MCF 10A (cell line): ENCODE measurements at regions of chr6 and their contacts with region 1.

Region 1: GRCh38 chr6:148177589-148178233 is 164.9 kb upstream of the SASH1 start:
- DNase-seq: peak; percentile 72
- H3K4me3 Mint-ChIP-seq: no peak overlapping the region
- H3K27ac Mint-ChIP-seq: no peak overlapping the region
- H3K4me1 Mint-ChIP-seq: no peaks in the 10 kb centered on the region
- H3K27me3 Mint-ChIP-seq: no peaks in the 10 kb centered on the region
- CTCF ChIP-seq: peak; percentile 76

Region 2: GRCh38 chr6:148144917-148145521 is 32.7 kb before region 1 on chr6:
- CTCF ChIA-PET with region 1: no interaction called
- POLR2A ChIA-PET with region 1: no interaction called
- intact Hi-C with region 1: no loop called
- DNase-seq: peak; percentile 76
- H3K4me3 Mint-ChIP-seq: no peak overlapping the region
- H3K27ac Mint-ChIP-seq: no peak overlapping the region
- H3K4me1 Mint-ChIP-seq: peaks cover 11% of the 10 kb centered on the region
- H3K27me3 Mint-ChIP-seq: no peaks in the 10 kb centered on the region
- CTCF ChIP-seq: peak; percentile 37

Region 3: GRCh38 chr6:148166339-148166968 is 11.3 kb before region 1 on chr6:
- CTCF ChIA-PET with region 1: interaction called, 11 read pairs
- POLR2A ChIA-PET with region 1: no interaction called
- intact Hi-C with region 1: no loop called
- DNase-seq: peak; percentile 71
- H3K4me3 Mint-ChIP-seq: no peak overlapping the region
- H3K27ac Mint-ChIP-seq: no peak overlapping the region
- H3K4me1 Mint-ChIP-seq: no peaks in the 10 kb centered on the region
- H3K27me3 Mint-ChIP-seq: no peaks in the 10 kb centered on the region
- CTCF ChIP-seq: peak; percentile 63

Region 4: GRCh38 chr6:148240461-148240840 is 62.7 kb after region 1 on chr6:
- CTCF ChIA-PET with region 1: interaction called, 258 read pairs
- POLR2A ChIA-PET with region 1: interaction called, 4 read pairs
- intact Hi-C with region 1: no loop called
- DNase-seq: no peak
- H3K4me3 Mint-ChIP-seq: no peak overlapping the region
- H3K27ac Mint-ChIP-seq: no peak overlapping the region
- H3K4me1 Mint-ChIP-seq: peaks cover 29% of the 10 kb centered on the region
- H3K27me3 Mint-ChIP-seq: no peaks in the 10 kb centered on the region
- CTCF ChIP-seq: no peak

Region 5: DNA sequence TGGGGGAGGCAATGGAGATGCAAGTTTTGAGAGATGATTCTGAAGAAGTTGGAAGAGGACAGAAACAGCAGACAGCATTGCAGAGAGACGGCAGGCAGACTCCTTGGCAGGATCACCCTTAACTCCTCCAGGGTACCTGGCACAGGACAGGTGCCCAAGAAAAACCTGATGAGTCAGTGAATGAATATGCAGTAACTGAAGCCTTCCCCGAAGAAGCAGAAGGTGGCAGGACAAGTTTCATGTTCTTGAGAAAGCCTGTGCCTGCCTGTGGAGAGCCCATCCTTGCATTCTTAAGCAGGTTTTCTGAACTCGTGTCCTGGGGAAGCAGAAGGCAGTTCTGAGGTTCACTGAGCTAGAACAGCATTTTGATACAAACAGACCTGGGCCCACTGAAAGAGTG is 85.3 kb after region 1 on chr6:
- CTCF ChIA-PET with region 1: interaction called, 258 read pairs
- POLR2A ChIA-PET with region 1: interaction called, 3 read pairs
- intact Hi-C with region 1: no loop called
- DNase-seq: peak; percentile 77
- H3K4me3 Mint-ChIP-seq: no peak overlapping the region
- H3K27ac Mint-ChIP-seq: no peak overlapping the region
- H3K4me1 Mint-ChIP-seq: peaks cover 24% of the 10 kb centered on the region
- H3K27me3 Mint-ChIP-seq: no peaks in the 10 kb centered on the region
- CTCF ChIP-seq: no peak

Region 6: DNA sequence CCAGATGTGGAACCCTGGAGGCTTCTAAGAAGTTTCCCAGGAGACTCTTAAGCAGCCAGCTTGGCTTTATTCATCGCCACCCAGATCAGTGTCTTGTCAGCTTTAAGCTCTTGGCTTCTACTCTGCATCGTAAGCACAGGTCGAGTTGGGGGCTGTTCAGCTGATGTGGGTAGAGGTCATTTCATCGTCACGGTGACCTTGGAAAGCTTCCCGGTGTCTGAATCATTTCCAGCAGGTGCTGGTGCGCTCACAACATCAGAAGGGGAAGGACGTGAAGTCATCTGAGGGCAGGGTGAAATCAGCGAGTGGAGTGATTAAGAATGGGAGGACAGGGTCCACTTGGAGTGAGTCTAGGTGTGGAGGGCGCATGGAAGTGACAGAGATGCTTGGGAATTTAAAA is 277.5 kb after region 1 on chr6:
- CTCF ChIA-PET with region 1: interaction called, 17 read pairs
- POLR2A ChIA-PET with region 1: no interaction called
- intact Hi-C with region 1: no loop called
- DNase-seq: peak; percentile 8
- H3K4me3 Mint-ChIP-seq: no peak overlapping the region
- H3K27ac Mint-ChIP-seq: no peak overlapping the region
- H3K4me1 Mint-ChIP-seq: no peaks in the 10 kb centered on the region
- H3K27me3 Mint-ChIP-seq: no peaks in the 10 kb centered on the region
- CTCF ChIP-seq: no peak

Region 7: GRCh38 chr6:148470606-148471299 is 293.0 kb after region 1 on chr6:
- CTCF ChIA-PET with region 1: interaction called, 27 read pairs
- POLR2A ChIA-PET with region 1: interaction called, 4 read pairs
- intact Hi-C with region 1: no loop called
- DNase-seq: no peak
- H3K4me3 Mint-ChIP-seq: no peak overlapping the region
- H3K27ac Mint-ChIP-seq: no peak overlapping the region
- H3K4me1 Mint-ChIP-seq: peaks cover 13% of the 10 kb centered on the region
- H3K27me3 Mint-ChIP-seq: no peaks in the 10 kb centered on the region
- CTCF ChIP-seq: no peak

Region 8: DNA sequence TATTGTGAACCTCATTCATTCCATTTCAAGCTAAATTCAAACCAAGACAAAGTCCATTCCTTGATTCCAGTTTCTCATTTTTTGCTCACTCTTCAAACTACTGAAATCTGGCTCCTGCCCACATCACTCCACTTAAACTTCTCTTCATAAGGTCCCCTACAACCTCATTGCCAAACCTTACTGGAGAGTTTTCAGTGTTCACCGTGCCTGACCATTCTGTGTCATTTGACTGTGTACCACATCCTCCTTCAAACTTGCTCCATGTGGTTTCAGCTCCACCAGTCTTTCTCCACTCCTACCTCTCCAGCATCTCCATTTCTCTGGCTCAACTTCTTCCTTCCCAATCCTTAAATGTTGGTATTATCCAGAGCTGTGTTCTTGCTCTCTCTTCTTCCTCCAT is 1101.3 kb after region 1 on chr6:
- CTCF ChIA-PET with region 1: no interaction called
- POLR2A ChIA-PET with region 1: no interaction called
- intact Hi-C with region 1: no loop called
- DNase-seq: no peak
- H3K4me3 Mint-ChIP-seq: no peak overlapping the region
- H3K27ac Mint-ChIP-seq: no peak overlapping the region
- H3K4me1 Mint-ChIP-seq: no peaks in the 10 kb centered on the region
- H3K27me3 Mint-ChIP-seq: no peaks in the 10 kb centered on the region
- CTCF ChIP-seq: no peak